ENCODE measurements at regions of chr9 and their contacts with region 1.

Region 1: DNA sequence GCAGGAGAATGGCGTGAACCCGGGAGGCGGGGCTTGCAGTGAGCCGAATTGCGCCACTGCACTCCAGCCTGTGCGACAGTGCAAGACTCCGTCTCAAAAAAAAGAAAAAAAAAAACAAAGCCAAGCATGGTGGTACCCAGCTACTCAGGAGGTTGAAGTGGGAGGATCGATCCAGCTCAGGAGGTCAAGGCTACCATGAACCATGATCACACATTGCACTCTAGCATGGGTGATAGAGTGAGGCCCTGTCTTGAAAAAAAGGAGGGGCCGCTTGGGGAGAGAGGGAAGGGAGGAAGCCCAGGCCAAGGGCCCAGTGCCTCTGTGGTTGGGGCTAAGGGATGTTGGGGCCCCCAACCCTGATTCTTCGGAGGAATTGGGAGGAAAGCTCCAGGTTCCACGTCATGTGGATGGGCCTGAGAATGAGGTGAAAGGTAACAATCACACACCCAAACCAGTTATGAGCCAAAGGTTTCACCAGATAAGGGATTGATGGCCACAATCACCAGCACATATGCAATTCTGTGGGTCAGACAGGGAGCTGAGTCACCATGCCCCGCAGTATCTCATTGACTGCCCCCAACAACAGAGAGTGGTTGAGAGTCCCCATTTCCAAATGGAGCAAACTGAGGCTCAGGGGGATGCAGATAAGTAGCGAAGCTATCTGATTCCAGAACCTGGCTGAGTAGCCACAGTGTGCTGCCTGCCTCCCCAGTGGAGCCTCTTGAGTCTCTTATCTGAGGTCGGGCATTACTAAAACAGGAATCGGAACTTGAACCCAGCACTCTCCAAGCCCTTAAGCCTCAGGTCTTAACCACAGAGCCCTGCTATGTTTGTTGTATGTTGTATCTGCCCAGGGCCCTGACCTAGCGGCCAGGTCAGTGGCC is 20.5 kb downstream of the SWI5 start:
- DNase-seq: peak; percentile 46
- ATAC-seq: peak; percentile 75
- H3K4me3 ChIP-seq: peak overlapping the region; percentile 25 to 69 (median 40); a peak in 4 of 6 replicates
- H3K27ac ChIP-seq: peak overlapping the region; percentile 71
- H3K4me1 ChIP-seq: peaks cover 36% of the 10 kb centered on the region
- H3K27me3 ChIP-seq: no peaks in the 10 kb centered on the region; a peak in 2 of 5 replicates
- CTCF ChIP-seq: no peak
- EP300 ChIP-seq: peak in 1 of 2 experiments; percentile 8; a peak in 1 of 4 replicates
- POLR2A ChIP-seq: no peak
- RAD21 ChIP-seq: no peak

Region 2: GRCh38 chr9:127916665-127917613 is 379.6 kb before region 1 on chr9 and contains the start of gene ST6GALNAC4:
- CTCF ChIA-PET with region 1: no interaction called
- POLR2A ChIA-PET with region 1: no interaction called
- in situ Hi-C with region 1: no loop called
- intact Hi-C with region 1: no loop called
- DNase-seq: peak; percentile 70
- ATAC-seq: peak; percentile 70
- H3K4me3 ChIP-seq: peak within 1 kb of the TSS; percentile 71 to 91 (median 73)
- H3K27ac ChIP-seq: peak within 1 kb of the TSS; percentile 40
- H3K4me1 ChIP-seq: peaks cover 78% of the 10 kb centered on the region
- H3K27me3 ChIP-seq: no peaks in the 10 kb centered on the region
- CTCF ChIP-seq: no peak
- EP300 ChIP-seq: no peak
- POLR2A ChIP-seq: no peak
- RAD21 ChIP-seq: no peak
- total RNA-seq, gene ST6GALNAC4: 14.8 and 18.8 TPM in 2 replicates

Region 3: GRCh38 chr9:128275996-128276573 is 20.5 kb before region 1 on chr9 and contains the starts of genes GOLGA2 and SWI5:
- CTCF ChIA-PET with region 1: no interaction called
- POLR2A ChIA-PET with region 1: interaction called, 21 read pairs
- in situ Hi-C with region 1: no loop called
- intact Hi-C with region 1: no loop called
- DNase-seq: peak; percentile 96
- ATAC-seq: peak; percentile 96
- H3K4me3 ChIP-seq: peak within 1 kb of the TSS; percentile 91 to 98 (median 96)
- H3K27ac ChIP-seq: peak within 1 kb of the TSS; percentile 85
- H3K4me1 ChIP-seq: peaks cover 29% of the 10 kb centered on the region
- H3K27me3 ChIP-seq: no peaks in the 10 kb centered on the region; a peak in 1 of 5 replicates
- CTCF ChIP-seq: no peak; the same call in 1 of the 2 replicates
- EP300 ChIP-seq: 0 out of 4 replicates have a peak, but pooled peaks of 1 of the 2 experiments have one; percentile 1
- POLR2A ChIP-seq: peak; percentile 94 to 99
- RAD21 ChIP-seq: no peak
- total RNA-seq, gene GOLGA2: 35.4 and 45.8 TPM in 2 replicates
- total RNA-seq, gene SWI5: 39.2 and 46.5 TPM in 2 replicates

Region 4: DNA sequence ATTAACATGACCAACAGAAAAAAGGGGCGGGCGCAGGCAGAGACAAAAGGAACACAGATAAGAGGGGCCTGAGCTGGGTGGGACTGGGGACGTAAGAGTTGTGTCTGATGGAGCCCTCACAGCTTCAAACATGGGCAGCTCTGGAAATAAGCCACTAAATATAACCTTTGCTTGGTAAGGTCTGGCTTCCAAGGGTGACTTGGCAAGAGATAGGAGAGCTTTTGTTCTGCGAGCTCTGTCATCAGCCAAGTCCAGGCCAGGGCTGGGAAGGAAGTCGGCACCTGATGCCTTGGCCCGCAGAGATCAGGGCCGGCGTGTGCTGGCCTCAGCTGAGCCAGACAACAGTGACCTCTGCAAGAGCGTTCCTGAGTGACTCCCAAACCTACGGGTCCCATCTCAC is 13.9 kb after region 1 on chr9:
- CTCF ChIA-PET with region 1: no interaction called
- POLR2A ChIA-PET with region 1: interaction called, 34 read pairs
- in situ Hi-C with region 1: no loop called
- intact Hi-C with region 1: no loop called
- DNase-seq: no peak
- ATAC-seq: no peak
- H3K4me3 ChIP-seq: no peak overlapping the region
- H3K27ac ChIP-seq: no peak overlapping the region
- H3K4me1 ChIP-seq: no peaks in the 10 kb centered on the region
- H3K27me3 ChIP-seq: no peaks in the 10 kb centered on the region
- CTCF ChIP-seq: no peak
- EP300 ChIP-seq: no peak
- POLR2A ChIP-seq: no peak
- RAD21 ChIP-seq: no peak

Region 5: DNA sequence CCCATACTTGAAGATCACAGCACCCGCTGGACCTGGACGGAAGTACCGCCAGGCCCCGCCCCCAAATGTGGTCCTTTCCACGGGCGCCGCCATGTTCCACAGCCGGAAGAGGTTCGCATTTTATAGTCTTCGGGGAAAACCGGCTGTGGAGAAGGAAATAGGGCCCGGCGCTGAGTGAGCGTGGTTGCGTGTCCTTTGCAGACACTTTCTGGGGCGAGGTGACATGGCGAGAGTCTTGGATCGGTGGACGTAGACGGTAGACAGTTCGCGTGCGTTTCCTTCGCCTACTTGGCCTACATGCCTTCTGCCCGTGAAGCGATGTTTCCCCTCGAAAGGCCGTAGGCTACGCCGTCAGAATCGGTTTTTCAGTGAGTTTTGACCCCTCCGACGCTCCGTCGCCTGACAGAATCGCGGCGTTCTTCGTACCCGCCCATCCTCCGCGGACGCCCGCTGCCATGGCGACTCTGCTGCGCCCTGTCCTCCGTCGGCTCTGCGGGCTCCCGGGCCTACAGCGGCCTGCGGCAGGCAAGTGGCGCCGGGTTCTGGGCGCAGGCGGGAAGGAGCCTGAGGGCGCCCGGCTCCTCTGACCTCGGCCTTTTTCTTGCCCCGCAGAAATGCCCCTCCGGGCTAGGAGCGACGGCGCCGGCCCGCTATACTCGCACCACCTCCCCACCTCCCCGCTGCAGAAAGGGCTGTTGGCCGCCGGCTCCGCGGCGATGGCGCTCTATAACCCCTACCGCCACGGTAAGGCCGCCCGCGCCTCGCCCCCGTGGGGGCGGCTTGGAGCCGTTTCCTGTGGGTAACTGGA is 26.0 kb after region 1 on chr9 and contains the starts of genes COQ4 and TRUB2:
- CTCF ChIA-PET with region 1: no interaction called
- POLR2A ChIA-PET with region 1: interaction called, 7 read pairs
- in situ Hi-C with region 1: no loop called
- intact Hi-C with region 1: loop called (anchors 2 kb)
- DNase-seq: peak; percentile 89
- ATAC-seq: peak; percentile 93
- H3K4me3 ChIP-seq: peak within 1 kb of the TSS; percentile 93 to 99 (median 94)
- H3K27ac ChIP-seq: peak within 1 kb of the TSS; percentile 93
- H3K4me1 ChIP-seq: peaks cover 23% of the 10 kb centered on the region
- H3K27me3 ChIP-seq: no peaks in the 10 kb centered on the region; a peak in 1 of 5 replicates
- CTCF ChIP-seq: no peak; the same call in 1 of the 2 replicates
- EP300 ChIP-seq: peak in 1 of 2 experiments; percentile 12; a peak in 1 of 4 replicates
- POLR2A ChIP-seq: peak; percentile 80 to 85; a peak in 3 of 4 replicates
- RAD21 ChIP-seq: peak; percentile 25
- total RNA-seq, gene COQ4: 16.2 and 26.1 TPM in 2 replicates
- total RNA-seq, gene TRUB2: 41.2 and 57.8 TPM in 2 replicates

Region 6: GRCh38 chr9:128339771-128340690 is 43.5 kb after region 1 on chr9 and contains the start of gene SLC27A4:
- CTCF ChIA-PET with region 1: interaction called, 29 read pairs
- POLR2A ChIA-PET with region 1: interaction called, 14 read pairs
- in situ Hi-C with region 1: loop called (anchors 5 kb)
- intact Hi-C with region 1: loop called (anchors 1 kb)
- DNase-seq: peak; percentile 70
- ATAC-seq: peak; percentile 86
- H3K4me3 ChIP-seq: peak within 1 kb of the TSS; percentile 85 to 95 (median 87)
- H3K27ac ChIP-seq: peak within 1 kb of the TSS; percentile 68
- H3K4me1 ChIP-seq: peaks cover 19% of the 10 kb centered on the region
- H3K27me3 ChIP-seq: no peaks in the 10 kb centered on the region
- CTCF ChIP-seq: no peak
- EP300 ChIP-seq: no peak
- POLR2A ChIP-seq: peak in 1 of 2 experiments; percentile 69
- RAD21 ChIP-seq: no peak
- total RNA-seq, gene SLC27A4: 9.3 and 18.8 TPM in 2 replicates

Region 7: GRCh38 chr9:128361986-128362646 is 65.5 kb after region 1 on chr9:
- CTCF ChIA-PET with region 1: no interaction called
- POLR2A ChIA-PET with region 1: interaction called, 9 read pairs
- in situ Hi-C with region 1: no loop called
- intact Hi-C with region 1: loop called (anchors 2 kb)
- DNase-seq: peak; percentile 67
- ATAC-seq: peak; percentile 87
- H3K4me3 ChIP-seq: peak overlapping the region in 1 of 3 experiments; percentile 59; a peak in 3 of 6 replicates
- H3K27ac ChIP-seq: no peak overlapping the region
- H3K4me1 ChIP-seq: peaks cover 34% of the 10 kb centered on the region
- H3K27me3 ChIP-seq: peaks cover 0 to 1% of the 10 kb centered on the region in 2 experiments; a peak in 1 of 5 replicates
- CTCF ChIP-seq: peak; percentile 96
- EP300 ChIP-seq: no peak
- POLR2A ChIP-seq: no peak
- RAD21 ChIP-seq: peak; percentile 93

Region 8: DNA sequence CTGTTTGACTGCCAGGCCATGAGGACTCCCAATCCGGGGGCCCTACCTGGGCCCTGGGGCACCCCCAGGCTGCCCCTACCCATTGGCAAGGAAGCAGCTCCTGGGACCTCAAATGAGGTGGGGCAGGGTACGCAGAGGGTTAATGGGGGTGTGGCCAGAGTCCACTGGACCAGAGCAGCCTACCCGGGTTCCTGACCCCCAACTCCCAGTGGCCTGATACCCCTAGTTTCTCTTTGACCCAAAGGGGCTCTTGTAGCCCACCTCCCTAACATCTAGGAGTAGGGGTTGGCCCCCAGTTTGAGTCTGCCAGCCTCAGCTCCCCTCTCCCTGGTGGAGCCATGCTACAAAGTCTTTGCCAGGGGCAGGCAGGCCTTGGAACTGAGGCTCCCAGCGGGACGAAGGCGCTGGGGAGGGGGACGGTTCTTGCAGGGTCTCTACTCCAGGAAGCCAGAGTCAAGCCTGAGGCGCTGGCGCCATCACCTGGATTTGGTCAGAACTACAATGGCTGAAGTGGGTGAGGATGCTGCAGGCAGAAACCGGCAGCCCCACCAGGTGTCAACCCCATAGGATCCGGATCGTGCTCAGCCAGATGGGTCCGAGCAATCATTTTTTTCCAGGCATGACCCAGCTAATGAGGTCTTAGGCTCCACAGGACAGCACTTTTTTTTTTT is 115.7 kb after region 1 on chr9:
- CTCF ChIA-PET with region 1: interaction called, 3 read pairs
- POLR2A ChIA-PET with region 1: interaction called, 5 read pairs
- in situ Hi-C with region 1: loop called (anchors 5 kb)
- intact Hi-C with region 1: loop called (anchors 5 kb)
- DNase-seq: peak; percentile 58
- ATAC-seq: peak; percentile 71
- H3K4me3 ChIP-seq: peak overlapping the region in 1 of 3 experiments; percentile 26; a peak in 1 of 6 replicates
- H3K27ac ChIP-seq: no peak overlapping the region
- H3K4me1 ChIP-seq: peaks cover 44% of the 10 kb centered on the region
- H3K27me3 ChIP-seq: peaks cover 1 to 7% of the 10 kb centered on the region in 2 experiments; a peak in 3 of 5 replicates
- CTCF ChIP-seq: peak; percentile 96
- EP300 ChIP-seq: no peak
- POLR2A ChIP-seq: no peak
- RAD21 ChIP-seq: peak; percentile 87